Gastrocnemius medialis (tissue), 4 donors: ENCODE measurements at regions of chr1 and their contacts with region 1.

Region 1: DNA sequence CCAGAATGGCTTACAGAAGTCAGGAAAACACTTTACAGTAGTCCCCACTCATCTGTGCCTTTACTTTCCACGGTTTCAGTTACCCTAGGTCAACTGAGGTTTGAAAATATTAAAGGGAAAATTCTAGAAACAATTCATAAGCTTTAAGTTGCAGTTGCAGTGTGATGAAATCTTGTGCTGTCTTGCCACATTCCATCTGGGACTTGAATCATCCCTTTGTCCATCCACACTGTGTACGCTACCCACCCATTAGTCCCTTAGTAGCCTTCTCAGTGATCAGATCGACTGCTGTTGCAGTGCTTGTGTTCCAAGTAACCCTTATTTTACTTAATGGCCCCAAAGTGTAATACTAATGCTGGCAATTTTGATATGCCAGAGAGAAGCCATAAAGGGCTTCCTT is 30.5 kb downstream of the ZCCHC17 start:
- DNase-seq: no peak
- ATAC-seq: no peak
- H3K4me3 ChIP-seq: no peak overlapping the region
- H3K27ac ChIP-seq: no peak overlapping the region
- H3K4me1 ChIP-seq: no peaks in the 10 kb centered on the region
- H3K27me3 ChIP-seq: no peaks in the 10 kb centered on the region
- CTCF ChIP-seq: no peak
- POLR2A ChIP-seq: no peak

Region 2: GRCh38 chr1:31272369-31272768 is 55.0 kb before region 1 on chr1:
- in situ Hi-C with region 1: no loop called
- intact Hi-C with region 1: no loop called
- DNase-seq: no peak
- ATAC-seq: peak in 1 of 2 donors; percentile 52
- H3K4me3 ChIP-seq: no peak overlapping the region
- H3K27ac ChIP-seq: no peak overlapping the region
- H3K4me1 ChIP-seq: peaks cover 0 to 10% of the 10 kb centered on the region in 2 donors
- H3K27me3 ChIP-seq: no peaks in the 10 kb centered on the region
- CTCF ChIP-seq: no peak
- POLR2A ChIP-seq: no peak

Region 3: GRCh38 chr1:31531177-31531999 is 204.0 kb after region 1 on chr1:
- in situ Hi-C with region 1: loop called in 1 of 4 experiments (anchors 10 kb)
- intact Hi-C with region 1: no loop called
- DNase-seq: no peak
- ATAC-seq: no peak
- H3K4me3 ChIP-seq: no peak overlapping the region
- H3K27ac ChIP-seq: no peak overlapping the region
- H3K4me1 ChIP-seq: no peaks in the 10 kb centered on the region
- H3K27me3 ChIP-seq: peaks cover 0 to 2% (median 0%) of the 10 kb centered on the region in 3 donors
- CTCF ChIP-seq: no peak
- POLR2A ChIP-seq: no peak